PC-3 (cell line): ENCODE measurements at regions of chr2 and their contacts with region 1.

Region 1: GRCh38 chr2:137865954-137866540 is 98.2 kb upstream of the HNMT start:
- DNase-seq: peak; percentile 75
- ATAC-seq: peak; percentile 71
- H3K4me3 ChIP-seq: no peak overlapping the region
- H3K27ac ChIP-seq: no peak overlapping the region
- H3K4me1 ChIP-seq: no peaks in the 10 kb centered on the region
- H3K27me3 ChIP-seq: peaks cover 6% of the 10 kb centered on the region
- CTCF ChIP-seq: peak; percentile 80

Region 2: DNA sequence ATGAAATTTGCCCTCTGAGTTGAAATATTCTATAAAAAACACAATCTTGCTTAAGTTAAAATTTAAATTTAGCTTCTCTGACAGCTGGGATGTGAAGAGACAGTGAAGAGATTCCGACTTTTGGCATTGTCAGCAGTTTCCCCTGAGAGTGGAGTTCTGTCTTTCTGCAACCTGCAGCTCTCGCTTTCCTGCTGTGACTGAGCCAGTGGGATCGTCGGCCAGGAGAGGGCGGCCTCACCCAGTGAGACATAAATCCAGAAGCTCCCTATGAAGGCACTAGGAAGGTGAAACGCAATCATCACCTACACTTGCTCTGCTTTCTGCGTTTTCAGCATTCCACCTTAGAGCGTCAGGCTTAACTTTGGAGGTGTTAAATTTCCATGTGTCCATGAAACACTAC is 22.8 kb after region 1 on chr2:
- CTCF ChIA-PET with region 1: interaction called, 6 read pairs
- POLR2A ChIA-PET with region 1: no interaction called
- intact Hi-C with region 1: loop called (anchors 1 kb)
- DNase-seq: peak; percentile 66
- ATAC-seq: no peak
- H3K4me3 ChIP-seq: no peak overlapping the region
- H3K27ac ChIP-seq: no peak overlapping the region
- H3K4me1 ChIP-seq: no peaks in the 10 kb centered on the region
- H3K27me3 ChIP-seq: no peaks in the 10 kb centered on the region
- CTCF ChIP-seq: peak; percentile 78